CD8-positive, alpha-beta T cell (primary cell): ENCODE measurements at regions of chr11 and their contacts with region 1.

Region 1: GRCh38 chr11:47847892-47848635 is at the start of gene NUP160:
- DNase-seq: peak; percentile 70 to 92 (median 88)
- ATAC-seq: peak; percentile 87
- H3K4me3 ChIP-seq: peak within 1 kb of the TSS; percentile 89 to 99
- H3K4me3 Mint-ChIP-seq: peak within 1 kb of the TSS; percentile 100
- H3K27ac ChIP-seq: peak within 1 kb of the TSS; percentile 88 to 95
- H3K27ac Mint-ChIP-seq: peak within 1 kb of the TSS; percentile 99
- H3K4me1 ChIP-seq: peaks cover 35% of the 10 kb centered on the region
- H3K4me1 Mint-ChIP-seq: peaks cover 45% of the 10 kb centered on the region
- H3K27me3 ChIP-seq: no peaks in the 10 kb centered on the region
- H3K27me3 Mint-ChIP-seq: no peaks in the 10 kb centered on the region
- CTCF ChIP-seq: no peak
- total RNA-seq, gene NUP160: 38.6 to 46.6 TPM

Region 2: GRCh38 chr11:46593550-46594373 is 1254.3 kb before region 1 on chr11 and contains the start of gene AMBRA1:
- CTCF ChIA-PET with region 1: no interaction called
- POLR2A ChIA-PET with region 1: no interaction called
- intact Hi-C with region 1: no loop called
- DNase-seq: peak; percentile 70 to 91 (median 81)
- ATAC-seq: peak; percentile 90
- H3K4me3 ChIP-seq: peak within 1 kb of the TSS; percentile 67 to 80
- H3K4me3 Mint-ChIP-seq: peak within 1 kb of the TSS; percentile 98
- H3K27ac ChIP-seq: peak within 1 kb of the TSS; percentile 57 to 67
- H3K27ac Mint-ChIP-seq: peak within 1 kb of the TSS; percentile 96
- H3K4me1 ChIP-seq: peaks cover 32% of the 10 kb centered on the region
- H3K4me1 Mint-ChIP-seq: peaks cover 43% of the 10 kb centered on the region
- H3K27me3 ChIP-seq: no peaks in the 10 kb centered on the region
- H3K27me3 Mint-ChIP-seq: no peaks in the 10 kb centered on the region
- CTCF ChIP-seq: no peak
- total RNA-seq, gene AMBRA1: 31.2 to 34.1 TPM

Region 3: DNA sequence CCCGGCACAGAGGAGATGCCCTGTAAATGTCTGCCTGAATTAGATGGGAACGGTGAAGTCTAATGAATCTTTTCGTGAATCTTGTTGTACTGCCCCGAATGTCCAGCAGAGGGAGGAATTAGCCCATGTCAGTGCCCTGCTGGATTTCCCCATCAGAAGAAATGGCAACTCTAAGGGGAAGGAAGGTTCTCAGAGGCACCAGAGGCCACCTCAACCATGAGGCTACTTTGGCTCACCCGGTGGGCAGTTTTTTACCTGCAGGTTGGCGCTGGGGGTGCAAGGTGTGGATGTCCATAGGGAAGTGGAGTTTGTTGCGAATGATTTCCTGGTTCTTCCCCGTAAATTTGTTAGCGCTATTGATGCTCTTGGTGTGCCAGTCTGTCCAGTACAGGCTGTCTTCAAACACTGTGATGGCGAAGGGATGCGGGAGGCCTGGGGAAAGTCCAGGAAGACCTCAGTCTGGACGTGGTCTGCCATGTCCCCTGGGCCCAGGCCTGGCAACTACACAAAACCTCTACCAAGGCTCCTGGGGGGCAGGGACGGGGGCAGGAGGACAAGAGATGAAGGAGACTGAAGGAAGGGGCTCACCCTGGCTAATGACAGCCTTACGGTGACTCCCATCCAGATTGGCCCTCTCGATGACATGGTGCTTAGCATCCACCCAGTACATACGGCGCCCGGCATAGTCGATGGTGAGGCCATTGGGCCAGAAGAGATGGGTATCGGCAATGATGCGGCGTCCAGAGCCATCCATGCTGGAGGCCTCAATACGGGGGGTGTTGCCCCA is 958.2 kb before region 1 on chr11:
- CTCF ChIA-PET with region 1: no interaction called
- POLR2A ChIA-PET with region 1: no interaction called
- intact Hi-C with region 1: loop called in 1 of 2 experiments (anchors 5 kb)
- DNase-seq: peak; percentile 51 to 84 (median 78)
- ATAC-seq: peak; percentile 97
- H3K4me3 ChIP-seq: no peak overlapping the region
- H3K4me3 Mint-ChIP-seq: no peak overlapping the region
- H3K27ac ChIP-seq: no peak overlapping the region
- H3K27ac Mint-ChIP-seq: peak overlapping the region; percentile 60
- H3K4me1 ChIP-seq: no peaks in the 10 kb centered on the region
- H3K4me1 Mint-ChIP-seq: peaks cover 3% of the 10 kb centered on the region
- H3K27me3 ChIP-seq: no peaks in the 10 kb centered on the region
- H3K27me3 Mint-ChIP-seq: no peaks in the 10 kb centered on the region
- CTCF ChIP-seq: peak; percentile 80

Region 4: DNA sequence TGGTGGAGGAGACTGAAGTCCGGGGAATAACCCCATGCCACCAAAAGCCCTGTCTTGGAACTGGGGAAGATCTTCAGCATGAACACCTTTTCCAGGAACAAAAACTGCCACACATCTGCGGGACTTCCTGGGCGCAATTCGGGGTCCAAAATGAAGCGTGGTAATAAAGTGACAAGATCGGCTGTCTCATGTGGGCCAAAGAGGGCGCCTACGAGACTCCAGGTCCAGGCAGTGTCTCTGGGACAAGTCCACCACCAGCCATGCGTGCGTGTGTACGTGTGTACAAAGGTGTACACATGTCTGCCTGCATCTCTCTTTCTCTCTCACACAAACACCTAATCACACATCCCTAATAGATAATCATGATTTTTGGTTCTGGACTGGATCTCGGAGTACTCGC is 486.6 kb before region 1 on chr11:
- CTCF ChIA-PET with region 1: no interaction called
- POLR2A ChIA-PET with region 1: no interaction called
- intact Hi-C with region 1: no loop called
- DNase-seq: no peak
- ATAC-seq: no peak
- H3K4me3 ChIP-seq: no peak overlapping the region
- H3K4me3 Mint-ChIP-seq: no peak overlapping the region
- H3K27ac ChIP-seq: no peak overlapping the region
- H3K27ac Mint-ChIP-seq: no peak overlapping the region
- H3K4me1 ChIP-seq: peaks cover 7% of the 10 kb centered on the region
- H3K4me1 Mint-ChIP-seq: peaks cover 10% of the 10 kb centered on the region
- H3K27me3 ChIP-seq: no peaks in the 10 kb centered on the region
- H3K27me3 Mint-ChIP-seq: peaks cover 2% of the 10 kb centered on the region
- CTCF ChIP-seq: no peak

Region 5: DNA sequence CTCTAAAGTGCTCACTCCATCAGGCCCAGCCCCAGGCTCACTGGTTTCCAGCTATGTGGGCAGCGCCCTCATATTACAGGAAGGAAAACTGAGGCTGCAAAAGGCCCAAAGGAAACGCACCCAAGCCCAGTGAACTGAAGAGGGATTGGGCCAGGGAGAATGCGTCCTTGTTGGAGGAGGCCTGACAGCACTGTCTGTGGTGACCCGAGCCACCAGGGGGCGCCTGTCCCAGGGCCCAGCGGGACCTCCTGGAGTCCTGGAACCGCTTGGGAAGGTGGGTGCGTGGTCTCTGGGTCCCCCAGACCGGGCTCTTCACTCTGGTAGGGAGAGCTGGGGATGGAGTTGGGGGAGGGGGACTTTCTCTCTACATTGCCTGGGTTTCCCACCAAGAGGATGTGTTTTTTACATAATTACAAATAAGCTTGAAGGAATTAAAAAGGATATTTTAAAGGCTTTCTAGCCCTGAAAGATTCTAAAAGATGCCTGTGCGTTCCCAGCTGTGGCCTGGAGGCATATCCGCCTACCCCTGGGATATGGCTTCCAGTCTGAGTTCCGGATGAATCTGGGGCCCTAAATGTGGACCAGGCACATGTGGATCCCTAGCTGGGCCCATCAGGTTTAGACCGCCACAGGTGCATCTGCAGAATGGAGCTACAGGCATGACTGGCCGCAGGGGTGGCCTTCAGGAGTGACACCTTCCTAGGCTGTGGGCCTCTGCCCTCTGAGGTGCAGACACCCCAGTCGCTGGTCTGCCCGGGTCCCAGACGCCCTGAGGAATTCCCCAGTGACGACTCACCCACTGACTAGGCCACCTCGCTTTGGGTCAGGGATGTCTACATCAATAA is 474.0 kb before region 1 on chr11:
- CTCF ChIA-PET with region 1: no interaction called
- POLR2A ChIA-PET with region 1: no interaction called
- intact Hi-C with region 1: loop called in 1 of 2 experiments (anchors 1 kb)
- DNase-seq: peak; percentile 66 to 94 (median 86)
- ATAC-seq: peak; percentile 97
- H3K4me3 ChIP-seq: no peak overlapping the region
- H3K4me3 Mint-ChIP-seq: no peak overlapping the region
- H3K27ac ChIP-seq: no peak overlapping the region
- H3K27ac Mint-ChIP-seq: no peak overlapping the region
- H3K4me1 ChIP-seq: peaks cover 3% of the 10 kb centered on the region
- H3K4me1 Mint-ChIP-seq: peaks cover 9% of the 10 kb centered on the region
- H3K27me3 ChIP-seq: no peaks in the 10 kb centered on the region
- H3K27me3 Mint-ChIP-seq: no peaks in the 10 kb centered on the region
- CTCF ChIP-seq: peak; percentile 91

Region 6: GRCh38 chr11:47642099-47642855 is 205.8 kb before region 1 on chr11 and contains the start of gene MTCH2:
- CTCF ChIA-PET with region 1: no interaction called
- POLR2A ChIA-PET with region 1: no interaction called
- intact Hi-C with region 1: loop called (anchors 1 to 2 kb)
- DNase-seq: peak; percentile 91 to 98 (median 95)
- ATAC-seq: peak; percentile 95
- H3K4me3 ChIP-seq: peak within 1 kb of the TSS; percentile 42 to 91
- H3K4me3 Mint-ChIP-seq: peak within 1 kb of the TSS; percentile 96
- H3K27ac ChIP-seq: peak within 1 kb of the TSS; percentile 55 to 96
- H3K27ac Mint-ChIP-seq: peak within 1 kb of the TSS; percentile 97
- H3K4me1 ChIP-seq: peaks cover 18% of the 10 kb centered on the region
- H3K4me1 Mint-ChIP-seq: peaks cover 32% of the 10 kb centered on the region
- H3K27me3 ChIP-seq: no peaks in the 10 kb centered on the region
- H3K27me3 Mint-ChIP-seq: no peaks in the 10 kb centered on the region
- CTCF ChIP-seq: no peak
- total RNA-seq, gene MTCH2: 16.4 to 19.5 TPM

Region 7: GRCh38 chr11:47766305-47767227 is 81.5 kb before region 1 on chr11:
- CTCF ChIA-PET with region 1: no interaction called
- POLR2A ChIA-PET with region 1: interaction called, 12 read pairs
- intact Hi-C with region 1: loop called (anchors 1 kb)
- DNase-seq: peak; percentile 48 to 90 (median 74)
- ATAC-seq: peak; percentile 33
- H3K4me3 ChIP-seq: peak overlapping the region; percentile 75 to 79
- H3K4me3 Mint-ChIP-seq: peak overlapping the region; percentile 94
- H3K27ac ChIP-seq: peak overlapping the region; percentile 91 to 97
- H3K27ac Mint-ChIP-seq: peak overlapping the region; percentile 100
- H3K4me1 ChIP-seq: peaks cover 29% of the 10 kb centered on the region
- H3K4me1 Mint-ChIP-seq: peaks cover 31% of the 10 kb centered on the region
- H3K27me3 ChIP-seq: no peaks in the 10 kb centered on the region
- H3K27me3 Mint-ChIP-seq: no peaks in the 10 kb centered on the region
- CTCF ChIP-seq: no peak